ENCODE measurements at regions of chr4 and their contacts with region 1.

Region 1: DNA sequence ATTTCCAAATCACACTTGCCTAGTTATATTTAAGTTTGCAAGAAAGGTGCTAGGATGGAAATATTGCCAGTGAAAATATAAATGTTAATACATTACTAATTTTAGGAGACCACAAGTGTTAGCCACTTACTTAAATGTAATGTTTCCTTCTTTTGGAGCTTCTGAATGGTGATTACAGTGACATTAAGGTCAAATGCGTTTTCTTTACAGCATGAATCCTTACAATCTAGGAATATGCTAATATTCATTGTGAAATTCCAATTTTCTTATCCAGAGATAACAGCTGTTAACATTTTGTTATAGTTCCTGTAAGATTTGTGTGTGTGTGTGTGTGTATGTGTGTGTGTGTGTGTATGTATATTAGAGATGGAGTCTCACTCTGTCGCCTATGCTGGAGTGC is 70.2 kb upstream of the NUDT6 start:
- DNase-seq: no peak
- ATAC-seq: no peak
- H3K4me3 ChIP-seq: no peak overlapping the region
- H3K27ac ChIP-seq: no peak overlapping the region
- H3K4me1 ChIP-seq: no peaks in the 10 kb centered on the region
- H3K27me3 ChIP-seq: no peaks in the 10 kb centered on the region
- CTCF ChIP-seq: no peak
- POLR2A ChIP-seq: no peak
- RAD21 ChIP-seq: no peak

Region 2: GRCh38 chr4:122922877-122923511 is 69.6 kb before region 1 on chr4:
- CTCF ChIA-PET with region 1: no interaction called
- POLR2A ChIA-PET with region 1: no interaction called
- dilution Hi-C with region 1: no loop called
- in situ Hi-C with region 1: no loop called
- intact Hi-C with region 1: no loop called
- DNase-seq: peak; percentile 82
- ATAC-seq: peak; percentile 94
- H3K4me3 ChIP-seq: peak overlapping the region; percentile 93
- H3K27ac ChIP-seq: peak overlapping the region; percentile 83
- H3K4me1 ChIP-seq: no peaks in the 10 kb centered on the region
- H3K27me3 ChIP-seq: no peaks in the 10 kb centered on the region
- CTCF ChIP-seq: no peak
- POLR2A ChIP-seq: no peak
- RAD21 ChIP-seq: no peak

Region 3: DNA sequence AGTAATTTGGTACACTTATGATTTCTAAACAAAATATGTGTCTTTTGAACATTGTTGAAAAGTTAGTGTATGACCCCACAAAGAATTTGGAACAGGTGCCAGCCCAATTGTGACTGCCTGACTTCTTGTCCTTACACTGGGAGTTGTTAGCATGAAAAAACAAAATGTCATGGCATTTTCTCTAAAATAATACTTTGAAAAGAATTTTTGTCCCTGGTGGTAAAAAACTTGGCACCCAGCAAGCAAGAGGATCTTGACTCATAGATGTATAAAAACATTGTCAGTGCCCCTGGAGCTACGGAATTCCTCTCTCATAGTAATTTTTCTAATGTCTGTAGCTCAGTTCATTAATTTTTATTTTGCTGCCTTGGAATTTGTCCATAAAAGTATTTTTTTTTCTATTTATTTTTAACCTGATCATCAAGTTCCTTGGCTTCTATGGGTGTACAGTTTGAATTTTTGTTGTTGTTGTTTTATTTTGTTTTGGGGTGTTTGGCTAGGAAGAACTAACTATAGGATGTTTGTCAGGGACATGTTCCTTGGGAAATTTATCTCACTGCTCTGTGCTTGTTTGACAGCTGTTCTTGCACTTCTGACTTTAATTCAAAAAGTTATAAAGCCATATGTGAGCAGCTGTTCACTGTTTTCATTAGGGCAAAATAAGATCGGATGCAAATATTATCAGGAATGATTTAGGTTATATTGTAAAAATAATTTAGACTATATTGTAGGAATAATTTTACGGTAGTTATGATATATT is 25.2 kb after region 1 on chr4:
- CTCF ChIA-PET with region 1: interaction called, 11 read pairs
- POLR2A ChIA-PET with region 1: no interaction called
- dilution Hi-C with region 1: no loop called
- in situ Hi-C with region 1: no loop called
- intact Hi-C with region 1: no loop called
- DNase-seq: peak; percentile 56
- ATAC-seq: peak; percentile 75
- H3K4me3 ChIP-seq: no peak overlapping the region
- H3K27ac ChIP-seq: no peak overlapping the region
- H3K4me1 ChIP-seq: peaks cover 3% of the 10 kb centered on the region; the same call in 1 of the 2 replicates
- H3K27me3 ChIP-seq: no peaks in the 10 kb centered on the region
- CTCF ChIP-seq: no peak
- POLR2A ChIP-seq: no peak
- RAD21 ChIP-seq: no peak

Region 4: DNA sequence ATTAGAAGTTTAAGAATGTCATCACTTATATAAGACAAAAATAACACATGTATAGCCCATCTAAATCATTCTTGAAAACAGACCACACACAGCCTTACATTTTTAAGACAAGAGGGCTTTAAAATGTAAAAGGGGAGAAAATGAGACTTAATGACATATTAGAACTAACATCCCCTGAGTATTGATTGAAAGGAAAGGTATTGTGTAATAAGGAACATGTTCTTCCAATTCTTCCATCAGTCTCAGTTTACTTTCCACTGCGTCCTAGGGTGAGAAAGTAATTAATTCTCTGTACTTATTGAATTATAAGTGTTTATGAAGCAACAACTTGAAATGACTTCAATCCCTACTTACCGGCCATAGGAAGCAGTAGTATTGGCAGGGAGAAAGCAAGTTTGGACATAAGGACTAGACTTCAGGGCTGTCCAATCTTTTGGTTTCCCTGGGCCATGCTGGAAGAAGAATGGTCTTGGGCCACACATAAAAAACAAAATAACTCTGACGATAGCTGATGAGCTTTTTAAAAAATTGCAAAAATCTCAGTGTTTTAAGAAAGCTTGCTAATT is 201.2 kb after region 1 on chr4:
- CTCF ChIA-PET with region 1: no interaction called
- POLR2A ChIA-PET with region 1: no interaction called
- dilution Hi-C with region 1: no loop called
- in situ Hi-C with region 1: no loop called
- intact Hi-C with region 1: no loop called
- DNase-seq: no peak
- ATAC-seq: no peak
- H3K4me3 ChIP-seq: no peak overlapping the region
- H3K27ac ChIP-seq: no peak overlapping the region
- H3K4me1 ChIP-seq: peaks cover 2% of the 10 kb centered on the region
- H3K27me3 ChIP-seq: no peaks in the 10 kb centered on the region
- CTCF ChIP-seq: no peak
- POLR2A ChIP-seq: no peak
- RAD21 ChIP-seq: no peak

Measured in IMR-90 (cell line).